ENCODE measurements at regions of chr18 and their contacts with region 1.

Region 1: GRCh38 chr18:2729757-2730156 is 74.2 kb downstream of the SMCHD1 start:
- DNase-seq: no peak
- ATAC-seq: no peak
- H3K4me3 ChIP-seq: no peak overlapping the region
- H3K4me3 Mint-ChIP-seq: no peak overlapping the region
- H3K27ac ChIP-seq: no peak overlapping the region
- H3K27ac Mint-ChIP-seq: no peak overlapping the region
- H3K4me1 ChIP-seq: no peaks in the 10 kb centered on the region
- H3K4me1 Mint-ChIP-seq: peaks cover 10 to 16% (median 14%) of the 10 kb centered on the region in 3 donors
- H3K27me3 ChIP-seq: no peaks in the 10 kb centered on the region
- H3K27me3 Mint-ChIP-seq: no peaks in the 10 kb centered on the region

Region 2: DNA sequence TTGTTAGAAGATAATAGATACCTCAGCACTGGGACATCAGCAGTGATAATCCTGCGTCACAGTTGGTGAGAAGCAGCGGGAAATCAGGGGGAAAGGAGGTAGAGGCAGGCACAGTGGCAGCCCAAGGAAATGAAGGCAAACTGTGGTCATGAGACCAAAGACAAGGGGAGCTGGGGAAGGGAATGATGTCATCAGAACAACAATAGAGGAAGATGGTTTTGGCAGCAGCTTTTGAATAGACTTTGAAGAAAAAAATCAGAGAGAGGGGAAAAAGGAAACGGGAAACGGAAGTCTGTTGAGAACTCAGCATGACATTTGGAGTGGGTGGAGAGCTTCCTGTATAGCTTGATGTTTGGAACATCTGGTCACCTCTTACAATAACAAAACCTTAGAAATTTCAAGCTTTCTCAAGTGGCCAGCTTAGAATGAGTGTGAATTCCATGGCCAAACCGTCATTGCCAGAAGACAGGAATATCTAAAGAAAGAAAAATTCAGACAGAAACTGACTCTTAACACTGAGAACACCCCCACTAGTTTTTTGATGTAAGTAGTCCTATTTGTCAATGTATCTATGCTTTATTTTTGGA is 1899.3 kb before region 1 on chr18:
- CTCF ChIA-PET with region 1: no interaction called
- POLR2A ChIA-PET with region 1: no interaction called
- DNase-seq: peak in 31 of 35 experiments; percentile 8 to 77 (median 49)
- ATAC-seq: peak; percentile 73 to 92 (median 82)
- H3K4me3 ChIP-seq: no peak overlapping the region
- H3K4me3 Mint-ChIP-seq: peak overlapping the region; percentile 10 to 55 (median 19)
- H3K27ac ChIP-seq: peak overlapping the region; percentile 57
- H3K27ac Mint-ChIP-seq: peak overlapping the region; percentile 77 to 79
- H3K4me1 ChIP-seq: peaks cover 19 to 21% of the 10 kb centered on the region in 2 experiments
- H3K4me1 Mint-ChIP-seq: peaks cover 24 to 32% (median 27%) of the 10 kb centered on the region in 3 donors
- H3K27me3 ChIP-seq: peaks cover 0 to 2% of the 10 kb centered on the region in 2 experiments
- H3K27me3 Mint-ChIP-seq: no peaks in the 10 kb centered on the region

Region 3: DNA sequence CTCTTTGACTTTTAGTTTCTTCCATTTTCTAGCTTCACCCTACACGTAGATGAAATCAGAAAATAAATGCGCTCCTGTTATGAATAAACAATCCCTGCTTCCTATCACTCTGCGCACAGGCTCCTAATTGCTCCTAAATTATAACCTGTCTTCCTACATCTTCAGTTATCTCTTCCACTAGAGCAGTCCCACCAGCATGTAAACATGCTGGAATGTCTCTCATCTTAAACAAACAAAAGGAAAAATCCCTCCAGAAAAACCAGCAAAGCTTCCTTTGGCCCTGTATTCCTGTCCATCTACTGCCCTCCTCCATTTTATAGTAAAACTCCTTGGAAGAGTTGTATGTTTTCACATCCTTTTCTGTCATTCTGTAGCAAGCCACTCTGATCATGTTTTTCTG is 11.9 kb after region 1 on chr18:
- CTCF ChIA-PET with region 1: interaction called in 1 of 2 experiments, 3 read pairs
- POLR2A ChIA-PET with region 1: interaction called, 4 to 10 read pairs
- DNase-seq: no peak
- ATAC-seq: peak in 1 of 4 experiments; percentile 15
- H3K4me3 ChIP-seq: no peak overlapping the region
- H3K4me3 Mint-ChIP-seq: no peak overlapping the region
- H3K27ac ChIP-seq: no peak overlapping the region
- H3K27ac Mint-ChIP-seq: peak overlapping the region; percentile 29 to 67
- H3K4me1 ChIP-seq: no peaks in the 10 kb centered on the region
- H3K4me1 Mint-ChIP-seq: peaks cover 16 to 32% (median 32%) of the 10 kb centered on the region in 3 donors
- H3K27me3 ChIP-seq: no peaks in the 10 kb centered on the region
- H3K27me3 Mint-ChIP-seq: no peaks in the 10 kb centered on the region

Region 4: DNA sequence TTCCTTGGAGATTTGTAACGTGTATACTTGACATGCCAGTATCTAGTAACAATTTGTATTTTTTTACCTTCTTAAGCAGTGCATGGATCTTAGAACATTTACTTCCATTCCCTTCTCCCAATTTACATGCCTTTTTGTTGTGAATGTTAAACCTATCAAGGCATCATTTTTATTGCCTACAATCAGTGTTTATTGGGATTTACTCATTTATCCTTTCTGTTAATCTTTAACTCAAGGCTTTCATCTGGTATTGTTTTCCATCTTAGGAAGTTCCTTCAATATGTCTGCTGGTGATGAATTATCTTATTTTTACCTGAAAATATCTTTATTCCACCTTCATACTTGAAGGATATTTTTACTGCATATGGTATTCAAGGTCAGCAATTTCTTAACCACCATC is 28.6 kb after region 1 on chr18:
- CTCF ChIA-PET with region 1: no interaction called
- POLR2A ChIA-PET with region 1: no interaction called
- DNase-seq: no peak
- ATAC-seq: no peak
- H3K4me3 ChIP-seq: no peak overlapping the region
- H3K4me3 Mint-ChIP-seq: no peak overlapping the region
- H3K27ac ChIP-seq: no peak overlapping the region
- H3K27ac Mint-ChIP-seq: peak overlapping the region; percentile 32 to 40
- H3K4me1 ChIP-seq: no peaks in the 10 kb centered on the region
- H3K4me1 Mint-ChIP-seq: peaks cover 12 to 31% (median 28%) of the 10 kb centered on the region in 3 donors
- H3K27me3 ChIP-seq: no peaks in the 10 kb centered on the region
- H3K27me3 Mint-ChIP-seq: no peaks in the 10 kb centered on the region

Region 5: DNA sequence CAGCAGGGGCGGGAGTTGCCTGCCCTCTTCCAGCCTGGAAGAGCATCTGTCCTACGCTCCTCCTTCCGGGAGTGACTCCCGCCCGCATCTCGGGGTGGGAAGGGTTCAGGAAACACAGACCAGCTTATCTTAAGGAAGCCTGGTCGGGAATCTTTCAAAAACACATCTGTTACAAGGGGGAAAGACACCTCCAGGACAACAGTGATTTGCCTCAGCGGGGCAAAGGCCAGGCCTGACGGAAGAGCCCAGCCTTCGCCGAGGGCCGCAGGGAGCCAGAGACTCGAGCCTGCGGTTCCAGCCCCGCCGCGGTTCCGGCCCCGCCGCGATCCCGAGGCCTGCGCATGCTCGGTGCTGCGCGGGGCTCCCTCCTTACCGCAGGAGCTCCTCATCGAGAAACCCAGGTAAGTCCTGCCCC is 682.1 kb after region 1 on chr18:
- CTCF ChIA-PET with region 1: no interaction called
- POLR2A ChIA-PET with region 1: no interaction called
- DNase-seq: peak in 23 of 35 experiments; percentile 1 to 43 (median 11)
- ATAC-seq: peak; percentile 19 to 69 (median 57)
- H3K4me3 ChIP-seq: peak overlapping the region in 1 of 2 donors; percentile 20
- H3K4me3 Mint-ChIP-seq: peak overlapping the region; percentile 45 to 72 (median 65)
- H3K27ac ChIP-seq: no peak overlapping the region
- H3K27ac Mint-ChIP-seq: peak overlapping the region in 1 of 2 donors; percentile 34
- H3K4me1 ChIP-seq: peaks cover 4 to 6% of the 10 kb centered on the region in 2 experiments
- H3K4me1 Mint-ChIP-seq: peaks cover 5 to 12% (median 10%) of the 10 kb centered on the region in 3 donors
- H3K27me3 ChIP-seq: no peaks in the 10 kb centered on the region
- H3K27me3 Mint-ChIP-seq: no peaks in the 10 kb centered on the region

Measured in T-cell (primary cell).